ENCODE measurements at regions of chr1 and their contacts with region 1.

Region 1: GRCh38 chr1:151405167-151405951 is 6.0 kb downstream of the PSMB4 start:
- DNase-seq: no peak
- H3K4me3 ChIP-seq: no peak overlapping the region
- H3K27ac ChIP-seq: no peak overlapping the region
- H3K4me1 ChIP-seq: peaks cover 0 to 4% (median under 1%) of the 10 kb centered on the region in 4 experiments; a peak in 3 of 7 replicates
- H3K27me3 ChIP-seq: no peaks in the 10 kb centered on the region
- CTCF ChIP-seq: no peak
- EP300 ChIP-seq: no peak
- POLR2A ChIP-seq: no peak
- RAD21 ChIP-seq: no peak

Region 2: GRCh38 chr1:151281969-151282882 is 123.1 kb before region 1 on chr1 and contains the start of gene ZNF687:
- CTCF ChIA-PET with region 1: no interaction called
- POLR2A ChIA-PET with region 1: no interaction called
- DNase-seq: peak; percentile 98 to 100
- H3K4me3 ChIP-seq: peak within 1 kb of the TSS; percentile 77 to 96 (median 86)
- H3K27ac ChIP-seq: peak within 1 kb of the TSS; percentile 99
- H3K4me1 ChIP-seq: peaks cover 5 to 9% (median 7%) of the 10 kb centered on the region in 4 experiments; a peak in 5 of 7 replicates
- H3K27me3 ChIP-seq: no peaks in the 10 kb centered on the region
- CTCF ChIP-seq: no peak
- EP300 ChIP-seq: no peak
- POLR2A ChIP-seq: no peak; a peak in 1 of 3 replicates
- RAD21 ChIP-seq: no peak
- total RNA-seq, gene ZNF687: 43.0 and 45.9 TPM in 2 replicates

Region 3: GRCh38 chr1:151416231-151416904 is 11.0 kb after region 1 on chr1:
- CTCF ChIA-PET with region 1: interaction called, 10 read pairs
- POLR2A ChIA-PET with region 1: interaction called, 42 read pairs
- DNase-seq: peak in 1 of 2 experiments; percentile 29
- H3K4me3 ChIP-seq: no peak overlapping the region
- H3K27ac ChIP-seq: no peak overlapping the region
- H3K4me1 ChIP-seq: no peaks in the 10 kb centered on the region
- H3K27me3 ChIP-seq: no peaks in the 10 kb centered on the region
- CTCF ChIP-seq: no peak
- EP300 ChIP-seq: no peak
- POLR2A ChIP-seq: no peak
- RAD21 ChIP-seq: no peak